ENCODE measurements at regions of chr9 and their contacts with region 1.

Region 1: GRCh38 chr9:124934290-124934689 is 6.6 kb downstream of the GOLGA1 start:
- DNase-seq: peak; percentile 22
- CTCF ChIP-seq: no peak

Region 2: GRCh38 chr9:124513376-124513994 is 420.8 kb before region 1 on chr9:
- CTCF ChIA-PET with region 1: no interaction called
- POLR2A ChIA-PET with region 1: no interaction called
- DNase-seq: no peak
- CTCF ChIP-seq: no peak

Region 3: DNA sequence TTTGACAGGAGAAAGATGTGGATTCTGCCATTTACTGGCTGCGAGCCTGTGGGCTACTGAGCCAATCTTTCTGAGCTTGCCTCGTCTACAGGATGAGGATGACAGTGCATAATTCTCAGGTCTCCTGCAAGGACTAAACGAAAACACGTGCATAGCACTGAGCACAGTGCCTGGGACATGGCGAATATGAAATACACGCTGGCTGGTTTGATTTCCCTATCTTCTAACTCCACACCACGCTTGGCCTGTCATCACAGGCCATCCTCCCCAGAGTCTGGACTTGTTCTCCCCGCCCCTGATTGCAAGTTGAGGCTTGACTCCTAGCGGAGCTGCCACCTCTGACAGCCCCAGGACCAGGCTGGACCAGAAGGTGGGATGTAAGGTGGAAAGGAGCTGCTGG is 34.4 kb before region 1 on chr9:
- CTCF ChIA-PET with region 1: no interaction called
- POLR2A ChIA-PET with region 1: no interaction called
- DNase-seq: no peak
- CTCF ChIP-seq: no peak

Region 4: GRCh38 chr9:125066839-125067619 is 132.7 kb after region 1 on chr9:
- CTCF ChIA-PET with region 1: no interaction called
- POLR2A ChIA-PET with region 1: no interaction called
- DNase-seq: no peak
- CTCF ChIP-seq: no peak

Region 5: DNA sequence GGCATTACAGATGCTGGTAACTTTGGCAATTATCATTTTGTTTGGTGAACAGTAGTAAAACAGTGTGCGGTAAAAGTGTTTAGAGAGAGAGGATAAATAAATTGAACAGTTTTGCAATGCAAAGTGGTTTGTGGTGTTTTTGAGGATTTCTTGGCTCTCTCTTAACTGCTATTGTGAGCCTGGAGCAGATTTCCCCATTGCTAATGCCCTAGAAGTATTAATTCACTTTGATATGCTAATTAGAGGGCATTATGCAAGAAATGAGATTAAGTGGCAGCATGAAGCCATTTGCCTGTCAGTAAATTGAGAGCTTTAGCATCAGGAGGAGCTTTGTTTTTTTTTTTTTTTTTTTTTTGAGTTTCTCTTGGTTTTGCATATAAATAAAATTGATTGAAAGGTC is 821.0 kb after region 1 on chr9:
- CTCF ChIA-PET with region 1: no interaction called
- POLR2A ChIA-PET with region 1: interaction called, 10 read pairs
- DNase-seq: no peak
- CTCF ChIP-seq: no peak